ENCODE measurements at regions of chr2 and their contacts with region 1.

Region 1: GRCh38 chr2:130342533-130343275 is at the start of gene IMP4:
- DNase-seq: peak; percentile 97 to 98
- ATAC-seq: peak; percentile 98
- H3K4me3 ChIP-seq: peak within 1 kb of the TSS; percentile 71 to 91
- H3K27ac ChIP-seq: peak within 1 kb of the TSS; percentile 24 to 92
- H3K4me1 ChIP-seq: no peaks in the 10 kb centered on the region
- H3K27me3 ChIP-seq: no peaks in the 10 kb centered on the region
- total RNA-seq, gene IMP4: 44.3 to 47.0 TPM

Region 2: DNA sequence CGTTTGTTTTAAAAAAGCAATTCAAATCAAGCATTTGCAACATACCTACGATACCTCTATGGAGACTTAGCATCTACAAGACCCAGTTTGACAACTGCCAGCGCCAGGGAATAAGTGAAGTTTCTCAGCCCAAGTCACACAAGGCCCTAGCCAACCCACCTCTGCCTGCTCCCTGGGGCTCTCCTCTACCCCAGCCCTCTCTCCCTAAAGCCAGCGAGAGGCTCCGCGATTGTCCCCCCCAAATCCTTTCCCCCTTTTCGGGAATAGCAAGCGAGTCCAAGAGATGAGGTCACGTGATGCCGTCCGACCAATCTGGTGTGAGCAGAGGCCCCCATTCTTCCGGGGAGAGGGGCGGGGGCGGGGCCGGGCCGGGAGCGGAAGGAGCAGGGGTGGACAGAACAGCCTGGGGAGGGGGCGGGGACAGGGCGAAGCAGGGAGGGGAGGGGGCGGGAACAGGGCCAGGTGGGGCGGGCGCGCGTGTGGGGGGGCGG is 465.4 kb before region 1 on chr2:
- intact Hi-C with region 1: loop called in 1 of 2 experiments (anchors 10 kb)
- DNase-seq: peak; percentile 95 to 97
- ATAC-seq: peak; percentile 90
- H3K4me3 ChIP-seq: peak overlapping the region; percentile 36 to 56
- H3K27ac ChIP-seq: peak overlapping the region in 1 of 2 donors; percentile 28
- H3K4me1 ChIP-seq: no peaks in the 10 kb centered on the region
- H3K27me3 ChIP-seq: no peaks in the 10 kb centered on the region

Region 3: GRCh38 chr2:130135692-130136541 is 206.8 kb before region 1 on chr2:
- intact Hi-C with region 1: no loop called
- DNase-seq: peak in 1 of 2 donors; percentile 59
- ATAC-seq: no peak
- H3K4me3 ChIP-seq: no peak overlapping the region
- H3K27ac ChIP-seq: no peak overlapping the region
- H3K4me1 ChIP-seq: no peaks in the 10 kb centered on the region
- H3K27me3 ChIP-seq: no peaks in the 10 kb centered on the region

Region 4: GRCh38 chr2:130372055-130372832 is 29.5 kb after region 1 on chr2:
- intact Hi-C with region 1: loop called in 1 of 2 experiments (anchors 1 kb)
- DNase-seq: peak; percentile 94 to 97
- ATAC-seq: peak; percentile 96
- H3K4me3 ChIP-seq: peak overlapping the region; percentile 58 to 91
- H3K27ac ChIP-seq: peak overlapping the region; percentile 6 to 54
- H3K4me1 ChIP-seq: no peaks in the 10 kb centered on the region
- H3K27me3 ChIP-seq: no peaks in the 10 kb centered on the region

Region 5: GRCh38 chr2:130382313-130382917 is 39.7 kb after region 1 on chr2:
- intact Hi-C with region 1: no loop called
- DNase-seq: no peak
- ATAC-seq: no peak
- H3K4me3 ChIP-seq: no peak overlapping the region
- H3K27ac ChIP-seq: no peak overlapping the region
- H3K4me1 ChIP-seq: no peaks in the 10 kb centered on the region
- H3K27me3 ChIP-seq: no peaks in the 10 kb centered on the region